Left ventricle myocardium superior (tissue), 1 donor: ENCODE measurements at regions of chr3 and their contacts with region 1.

Region 1: GRCh38 chr3:129490242-129491045 is 38.0 kb upstream of the RHO start:
- DNase-seq: peak; percentile 85
- ATAC-seq: peak; percentile 91

Region 2: DNA sequence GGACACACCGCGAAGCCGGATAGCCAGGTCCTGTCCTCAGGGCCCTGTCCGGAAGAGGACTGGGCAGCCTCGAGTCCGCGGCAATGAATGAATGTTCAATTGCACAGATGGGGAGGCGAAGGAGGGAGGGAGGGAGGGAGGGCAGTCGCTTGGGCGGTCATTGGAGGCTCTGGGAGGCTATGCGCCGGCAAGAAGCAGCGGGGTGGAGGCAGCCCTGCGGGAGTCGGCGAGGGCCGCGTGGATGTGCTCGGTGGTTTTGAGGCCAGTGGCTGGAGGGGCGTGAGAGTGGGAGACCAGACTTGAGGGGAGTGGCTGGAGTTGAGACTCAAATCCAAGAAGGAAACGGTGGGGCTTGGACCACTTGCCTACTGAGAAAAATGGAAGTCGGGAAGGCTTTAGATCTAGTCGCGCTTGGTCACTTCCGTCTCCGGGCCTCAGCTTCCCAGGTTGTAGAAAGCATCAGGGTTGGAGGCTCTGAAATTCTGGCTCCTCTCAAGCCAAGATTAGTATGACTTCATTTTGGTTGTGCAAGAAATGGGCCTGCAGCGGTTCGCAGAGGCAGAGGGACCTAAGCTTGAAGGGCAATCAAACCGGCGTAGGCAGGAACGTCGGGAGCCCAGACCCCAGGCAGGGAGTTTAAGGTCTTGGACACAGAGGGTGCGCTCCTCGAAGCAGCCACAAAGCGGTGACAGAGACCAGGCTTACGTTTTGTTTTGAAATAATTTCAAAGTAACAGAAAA is 137.2 kb after region 1 on chr3:
- intact Hi-C with region 1: loop called (anchors 10 kb)
- DNase-seq: peak; percentile 75
- ATAC-seq: peak; percentile 53